ENCODE measurements at regions of chr6 and their contacts with region 1.

Region 1: GRCh38 chr6:161370880-161371279 is 97.0 kb upstream of the AGPAT4 start:
- DNase-seq: peak; percentile 42 to 50
- ATAC-seq: peak in 5 of 8 donors; percentile 61 to 68 (median 62)
- H3K4me3 ChIP-seq: no peak overlapping the region
- H3K27ac ChIP-seq: no peak overlapping the region
- H3K4me1 ChIP-seq: peaks cover 0 to 12% (median 3%) of the 10 kb centered on the region in 9 donors
- H3K27me3 ChIP-seq: no peaks in the 10 kb centered on the region
- CTCF ChIP-seq: peak; percentile 71 to 92 (median 88)

Region 2: GRCh38 chr6:160733050-160733646 is 637.7 kb before region 1 on chr6:
- intact Hi-C with region 1: loop called (anchors 5 kb)
- DNase-seq: peak in 1 of 2 donors; percentile 31
- ATAC-seq: peak in 6 of 8 donors; percentile 50 to 76 (median 68)
- H3K4me3 ChIP-seq: no peak overlapping the region
- H3K27ac ChIP-seq: no peak overlapping the region
- H3K4me1 ChIP-seq: no peaks in the 10 kb centered on the region
- H3K27me3 ChIP-seq: peaks cover 0 to 25% (median 4%) of the 10 kb centered on the region in 7 donors
- CTCF ChIP-seq: peak; percentile 31 to 73 (median 66)

Region 3: DNA sequence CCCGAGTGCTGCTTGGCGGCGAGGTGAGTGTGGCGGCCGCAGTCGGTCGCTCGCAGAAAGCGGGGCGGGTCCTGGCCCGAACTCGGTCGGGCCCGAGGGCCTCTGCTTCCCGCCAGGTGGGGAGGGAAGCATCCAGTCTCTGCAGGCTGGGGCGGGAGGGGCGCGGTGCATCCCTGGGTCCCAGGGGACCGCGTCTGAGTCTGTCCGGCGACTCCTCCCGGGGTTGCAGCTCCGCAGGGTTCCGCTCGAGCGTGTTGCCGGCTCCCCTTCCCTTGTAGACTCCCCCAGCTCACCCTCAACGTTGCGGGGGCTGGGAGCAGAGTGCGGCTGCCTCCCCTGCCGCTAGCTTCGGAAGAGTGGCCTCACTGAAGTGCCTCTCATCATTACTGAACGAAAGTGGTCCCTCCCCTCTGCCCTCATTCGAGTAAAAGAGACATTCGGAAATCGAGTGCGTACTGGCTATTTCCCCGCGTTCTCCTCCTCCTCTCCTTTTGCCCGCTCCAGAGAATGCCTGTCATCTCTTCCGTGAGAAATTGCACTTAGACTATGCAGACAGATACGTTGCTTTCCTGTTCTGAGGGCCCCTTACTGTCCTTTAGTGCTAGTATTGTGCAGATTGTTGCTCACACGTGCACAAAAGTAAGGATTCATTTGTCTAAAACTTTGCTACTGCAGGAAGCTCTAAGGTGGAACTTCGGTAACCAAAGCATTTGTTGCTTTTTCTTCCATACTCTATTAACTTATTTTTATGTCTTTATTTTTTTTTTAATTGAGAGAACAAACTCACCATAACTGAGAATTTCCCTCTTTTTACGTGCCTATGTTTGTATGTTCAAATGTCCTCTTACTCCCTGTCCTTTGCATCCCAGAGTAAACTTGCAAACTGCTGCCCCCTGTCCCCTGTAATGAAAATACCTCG is 378.6 kb before region 1 on chr6:
- intact Hi-C with region 1: loop called in 1 of 10 experiments (anchors 5 kb)
- DNase-seq: peak; percentile 59 to 61
- ATAC-seq: peak; percentile 45 to 78 (median 74)
- H3K4me3 ChIP-seq: peak overlapping the region; percentile 67 to 100 (median 97)
- H3K27ac ChIP-seq: peak overlapping the region; percentile 81 to 99 (median 97)
- H3K4me1 ChIP-seq: peaks cover 0 to 50% (median 31%) of the 10 kb centered on the region in 9 donors
- H3K27me3 ChIP-seq: no peaks in the 10 kb centered on the region
- CTCF ChIP-seq: peak in 7 of 9 donors; percentile 40 to 77 (median 66)

Region 4: GRCh38 chr6:161128680-161129196 is 242.1 kb before region 1 on chr6:
- intact Hi-C with region 1: loop called in 1 of 10 experiments (anchors 10 kb)
- DNase-seq: no peak
- ATAC-seq: no peak
- H3K4me3 ChIP-seq: no peak overlapping the region
- H3K27ac ChIP-seq: no peak overlapping the region
- H3K4me1 ChIP-seq: peaks cover 0 to 14% (median 0%) of the 10 kb centered on the region in 9 donors
- H3K27me3 ChIP-seq: no peaks in the 10 kb centered on the region
- CTCF ChIP-seq: no peak

Region 5: GRCh38 chr6:161152907-161153662 is 217.8 kb before region 1 on chr6:
- intact Hi-C with region 1: loop called in 9 of 10 experiments (anchors 5 to 10 kb)
- DNase-seq: no peak
- ATAC-seq: peak in 7 of 8 donors; percentile 20 to 58 (median 44)
- H3K4me3 ChIP-seq: no peak overlapping the region
- H3K27ac ChIP-seq: no peak overlapping the region
- H3K4me1 ChIP-seq: peaks cover 0 to 6% (median 0%) of the 10 kb centered on the region in 9 donors
- H3K27me3 ChIP-seq: no peaks in the 10 kb centered on the region
- CTCF ChIP-seq: peak in 8 of 9 donors; percentile 10 to 58 (median 46)

Region 6: DNA sequence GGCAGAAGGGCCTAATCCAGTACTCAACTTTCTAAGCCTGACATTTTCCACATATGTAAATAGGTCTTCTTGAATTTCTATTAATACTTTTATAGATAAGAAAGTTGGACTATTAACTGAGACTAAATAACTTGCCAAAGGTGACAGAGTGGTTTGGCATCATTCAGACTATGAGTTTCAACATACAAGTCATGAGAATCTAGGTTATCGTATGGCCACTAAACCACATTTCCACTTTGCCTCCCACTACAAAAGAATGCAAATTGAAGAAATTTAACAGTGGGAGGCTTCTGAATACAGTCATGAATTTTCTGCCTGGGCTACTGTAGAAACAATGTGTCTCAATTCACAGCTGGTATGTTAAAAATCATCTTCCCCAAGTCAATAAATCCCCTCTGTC is 434.0 kb after region 1 on chr6:
- intact Hi-C with region 1: no loop called
- DNase-seq: no peak
- ATAC-seq: peak in 1 of 8 donors; percentile 46
- H3K4me3 ChIP-seq: no peak overlapping the region
- H3K27ac ChIP-seq: no peak overlapping the region
- H3K4me1 ChIP-seq: peaks cover 0 to 10% (median 0%) of the 10 kb centered on the region in 9 donors
- H3K27me3 ChIP-seq: no peaks in the 10 kb centered on the region
- CTCF ChIP-seq: no peak